CD4-positive, alpha-beta memory T cell (primary cell): ENCODE measurements at regions of chr15 and their contacts with region 1.

Region 1: GRCh38 chr15:60720493-60721256 is 241.7 kb upstream of the ICE2 start:
- DNase-seq: peak; percentile 59 to 77 (median 64)
- H3K4me3 ChIP-seq: peak overlapping the region; percentile 13 to 42
- H3K4me3 Mint-ChIP-seq: peak overlapping the region; percentile 71 to 88 (median 78)
- H3K27ac ChIP-seq: peak overlapping the region; percentile 72
- H3K27ac Mint-ChIP-seq: peak overlapping the region; percentile 83 to 98 (median 94)
- H3K4me1 ChIP-seq: peaks cover 62% of the 10 kb centered on the region
- H3K4me1 Mint-ChIP-seq: peaks cover 51 to 76% (median 57%) of the 10 kb centered on the region in 4 donors
- H3K27me3 ChIP-seq: no peaks in the 10 kb centered on the region
- H3K27me3 Mint-ChIP-seq: no peaks in the 10 kb centered on the region

Region 2: DNA sequence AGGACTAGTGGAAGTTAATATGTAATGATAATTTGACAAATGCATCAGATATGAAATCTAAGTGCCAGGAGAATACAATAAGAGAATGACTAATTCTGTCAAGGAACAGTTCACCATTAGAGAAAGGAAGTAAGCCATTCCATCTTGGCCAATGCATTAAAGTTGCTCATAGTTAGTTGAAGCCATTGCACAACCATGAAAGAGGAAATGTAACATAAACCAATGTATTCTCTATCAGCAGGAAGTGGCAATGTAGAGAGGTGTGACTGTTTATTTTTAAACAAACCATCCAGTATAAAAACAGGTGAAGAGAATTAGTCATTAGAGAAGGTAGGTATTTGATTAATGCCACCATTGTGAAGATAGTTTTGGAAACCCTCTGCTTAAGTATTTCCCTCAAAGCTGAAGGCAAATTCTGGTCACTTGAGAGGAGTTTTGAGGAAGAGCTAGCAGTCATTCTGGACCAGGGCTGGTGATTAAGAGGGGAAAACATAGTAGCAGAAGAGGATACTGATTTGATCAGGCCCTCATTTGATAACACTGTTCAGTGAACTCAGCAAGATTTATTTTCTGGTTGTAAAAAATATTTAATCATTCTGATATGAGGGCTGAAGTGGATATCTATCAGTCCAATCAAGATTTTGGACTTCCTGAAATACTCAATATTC is 312.1 kb before region 1 on chr15:
- CTCF ChIA-PET with region 1: no interaction called
- POLR2A ChIA-PET with region 1: no interaction called
- intact Hi-C with region 1: no loop called
- DNase-seq: peak in 4 of 5 donors; percentile 17 to 40 (median 31)
- H3K4me3 ChIP-seq: no peak overlapping the region
- H3K4me3 Mint-ChIP-seq: peak overlapping the region in 6 of 8 donors; percentile 27 to 83 (median 65)
- H3K27ac ChIP-seq: no peak overlapping the region
- H3K27ac Mint-ChIP-seq: peak overlapping the region; percentile 8 to 93 (median 77)
- H3K4me1 ChIP-seq: peaks cover 19% of the 10 kb centered on the region
- H3K4me1 Mint-ChIP-seq: peaks cover 11 to 21% (median 14%) of the 10 kb centered on the region in 4 donors
- H3K27me3 ChIP-seq: no peaks in the 10 kb centered on the region
- H3K27me3 Mint-ChIP-seq: no peaks in the 10 kb centered on the region

Region 3: DNA sequence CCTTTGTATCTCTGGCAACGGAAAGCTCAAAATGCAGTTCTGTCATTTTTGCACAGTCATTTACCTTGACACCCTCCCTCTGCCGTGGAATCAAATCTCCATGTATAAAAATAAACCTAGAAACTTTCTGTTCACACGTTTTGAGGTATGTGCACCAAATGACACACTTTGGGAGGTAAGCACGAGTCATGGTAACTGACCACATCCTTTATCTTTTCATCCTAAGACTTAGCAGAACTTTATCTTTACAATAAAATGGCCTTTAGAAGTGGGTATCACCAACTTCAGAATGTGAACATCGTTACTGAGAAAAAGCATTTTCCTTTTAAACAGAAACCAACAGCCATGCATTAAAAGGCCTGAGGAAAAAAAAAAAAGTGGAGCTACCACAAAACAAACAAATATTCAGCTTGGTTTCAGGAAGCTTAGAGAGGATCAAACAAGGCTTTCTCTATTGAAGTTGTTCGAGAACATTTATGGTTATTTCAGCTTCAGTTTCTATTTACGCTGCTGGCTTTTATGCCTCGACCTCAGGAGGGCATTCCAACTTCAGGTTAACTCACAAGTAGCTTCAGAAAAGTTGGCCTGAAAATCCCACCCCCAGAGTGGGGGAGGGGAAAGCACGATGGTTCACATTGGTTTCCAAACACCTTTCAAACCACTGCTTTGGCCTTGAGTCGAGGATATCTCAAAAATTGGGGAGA is 70.7 kb before region 1 on chr15:
- CTCF ChIA-PET with region 1: interaction called, 11 read pairs
- POLR2A ChIA-PET with region 1: interaction called, 19 read pairs
- intact Hi-C with region 1: loop called (anchors 10 kb)
- DNase-seq: peak; percentile 73 to 85 (median 81)
- H3K4me3 ChIP-seq: peak overlapping the region in 1 of 2 donors; percentile 46
- H3K4me3 Mint-ChIP-seq: peak overlapping the region; percentile 67 to 92 (median 85)
- H3K27ac ChIP-seq: peak overlapping the region; percentile 66
- H3K27ac Mint-ChIP-seq: peak overlapping the region; percentile 93 to 99 (median 97)
- H3K4me1 ChIP-seq: peaks cover 46% of the 10 kb centered on the region
- H3K4me1 Mint-ChIP-seq: peaks cover 36 to 55% (median 47%) of the 10 kb centered on the region in 4 donors
- H3K27me3 ChIP-seq: no peaks in the 10 kb centered on the region
- H3K27me3 Mint-ChIP-seq: no peaks in the 10 kb centered on the region

Region 4: DNA sequence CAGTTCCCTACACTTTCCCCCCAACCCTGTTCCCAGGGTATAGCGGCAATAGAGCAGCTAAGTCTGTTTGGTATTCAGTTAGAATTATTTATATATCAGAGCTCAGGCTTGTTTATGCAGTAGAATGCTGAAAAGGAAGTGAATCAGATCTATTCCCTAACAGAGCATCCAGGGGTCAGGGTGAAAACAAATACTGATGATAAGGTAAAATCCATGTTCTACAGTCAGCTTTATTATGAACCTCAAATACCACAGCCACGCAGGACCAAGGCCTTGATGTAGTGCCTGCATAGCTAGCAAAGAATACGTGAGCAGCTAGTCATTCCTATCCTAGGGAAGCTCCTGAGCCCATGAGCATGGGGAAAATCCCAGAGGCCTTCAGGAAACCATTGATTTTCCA is 12.0 kb before region 1 on chr15:
- CTCF ChIA-PET with region 1: interaction called, 50 read pairs
- POLR2A ChIA-PET with region 1: interaction called, 181 read pairs
- intact Hi-C with region 1: loop called (anchors 1 kb)
- DNase-seq: no peak
- H3K4me3 ChIP-seq: no peak overlapping the region
- H3K4me3 Mint-ChIP-seq: peak overlapping the region in 4 of 8 donors; percentile 0 to 48 (median 6)
- H3K27ac ChIP-seq: no peak overlapping the region
- H3K27ac Mint-ChIP-seq: peak overlapping the region in 3 of 7 donors; percentile 19 to 62 (median 41)
- H3K4me1 ChIP-seq: peaks cover 38% of the 10 kb centered on the region
- H3K4me1 Mint-ChIP-seq: peaks cover 35 to 53% (median 41%) of the 10 kb centered on the region in 4 donors
- H3K27me3 ChIP-seq: no peaks in the 10 kb centered on the region
- H3K27me3 Mint-ChIP-seq: no peaks in the 10 kb centered on the region

Region 5: GRCh38 chr15:60745469-60746061 is 24.9 kb after region 1 on chr15:
- CTCF ChIA-PET with region 1: interaction called, 5 read pairs
- POLR2A ChIA-PET with region 1: interaction called, 15 read pairs
- intact Hi-C with region 1: no loop called
- DNase-seq: no peak
- H3K4me3 ChIP-seq: no peak overlapping the region
- H3K4me3 Mint-ChIP-seq: no peak overlapping the region
- H3K27ac ChIP-seq: no peak overlapping the region
- H3K27ac Mint-ChIP-seq: peak overlapping the region in 2 of 7 donors; percentile 52 to 77
- H3K4me1 ChIP-seq: peaks cover 11% of the 10 kb centered on the region
- H3K4me1 Mint-ChIP-seq: peaks cover 13 to 26% (median 20%) of the 10 kb centered on the region in 4 donors
- H3K27me3 ChIP-seq: no peaks in the 10 kb centered on the region
- H3K27me3 Mint-ChIP-seq: no peaks in the 10 kb centered on the region

Region 6: DNA sequence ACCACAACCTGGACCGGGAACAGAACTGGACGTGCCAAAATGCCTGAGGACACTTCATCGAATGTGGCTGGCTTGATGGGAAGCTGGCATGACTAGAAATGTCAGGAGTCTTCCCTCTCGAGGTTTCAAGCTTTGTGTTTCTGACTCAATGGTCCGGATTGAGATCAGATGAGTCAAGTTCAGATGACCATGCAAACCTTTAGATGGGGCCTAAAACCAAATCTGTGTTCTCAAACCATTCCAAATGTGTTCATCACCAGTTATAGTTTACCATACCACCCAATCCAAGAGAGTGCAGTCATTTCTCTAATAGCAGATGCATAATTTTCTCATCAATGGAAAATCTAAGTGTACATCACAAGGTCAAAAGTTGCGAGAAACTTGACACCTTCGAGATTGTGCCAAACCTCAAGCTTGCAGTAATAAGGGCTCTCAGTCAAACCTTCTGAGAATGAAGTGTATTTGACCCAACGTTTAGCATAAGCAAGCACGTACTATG is 139.4 kb after region 1 on chr15:
- CTCF ChIA-PET with region 1: interaction called, 37 read pairs
- POLR2A ChIA-PET with region 1: interaction called, 6 read pairs
- intact Hi-C with region 1: no loop called
- DNase-seq: no peak
- H3K4me3 ChIP-seq: no peak overlapping the region
- H3K4me3 Mint-ChIP-seq: no peak overlapping the region
- H3K27ac ChIP-seq: no peak overlapping the region
- H3K27ac Mint-ChIP-seq: peak overlapping the region in 1 of 7 donors; percentile 1
- H3K4me1 ChIP-seq: peaks cover 6% of the 10 kb centered on the region
- H3K4me1 Mint-ChIP-seq: peaks cover 22 to 44% (median 33%) of the 10 kb centered on the region in 4 donors
- H3K27me3 ChIP-seq: no peaks in the 10 kb centered on the region
- H3K27me3 Mint-ChIP-seq: no peaks in the 10 kb centered on the region